ENCODE measurements at regions of chr19 and their contacts with region 1.

Region 1: DNA sequence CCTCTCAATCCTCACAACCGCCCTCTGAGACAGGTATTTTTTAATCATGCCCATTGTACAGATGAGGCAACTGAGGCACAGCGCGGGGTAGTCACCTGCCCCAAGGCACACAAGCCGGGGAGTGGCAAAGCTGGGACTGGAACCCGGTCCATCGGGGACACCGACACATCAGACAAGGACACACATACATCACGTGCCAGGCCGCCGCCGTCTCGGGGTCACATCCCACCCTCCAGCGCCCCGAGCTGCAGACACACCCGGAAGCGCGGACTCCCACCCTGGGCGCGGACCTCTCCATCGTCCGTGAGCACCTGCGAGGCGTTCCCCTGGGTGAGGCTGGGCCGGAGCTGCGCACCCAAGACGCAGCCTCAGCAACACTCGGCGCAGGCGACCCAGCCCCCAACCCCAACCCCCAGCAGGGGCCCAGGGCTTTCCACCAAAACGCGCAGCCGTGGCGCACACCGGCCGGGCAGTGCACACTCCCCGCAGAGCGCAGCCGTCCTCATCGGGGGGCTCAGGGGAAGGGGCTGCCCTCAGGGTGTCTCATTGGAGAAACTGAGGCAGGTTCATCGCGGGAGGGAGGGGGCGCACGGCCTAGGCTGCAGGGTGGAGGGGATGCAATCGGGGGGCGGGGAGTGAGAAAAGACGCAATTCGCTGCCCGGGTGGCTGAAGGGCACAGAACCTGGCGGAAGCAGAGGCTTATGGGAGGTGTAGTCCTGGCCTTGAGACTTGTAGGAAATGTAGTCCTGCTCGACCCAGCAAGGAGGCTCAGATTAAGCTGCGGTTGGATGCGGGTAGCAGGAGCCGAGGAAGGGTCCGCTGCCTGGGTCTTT is 1.9 kb upstream of the LMTK3 start:
- DNase-seq: peak; percentile 70 to 88 (median 73)
- H3K4me3 ChIP-seq: peak overlapping the region; percentile 65 to 89
- H3K4me3 Mint-ChIP-seq: no peak overlapping the region
- H3K27ac ChIP-seq: peak overlapping the region; percentile 59
- H3K27ac Mint-ChIP-seq: peak overlapping the region in 3 of 7 donors; percentile 68 to 96 (median 91)
- H3K4me1 ChIP-seq: peaks cover 27% of the 10 kb centered on the region
- H3K4me1 Mint-ChIP-seq: peaks cover 6 to 16% (median 11%) of the 10 kb centered on the region in 4 donors
- H3K27me3 ChIP-seq: no peaks in the 10 kb centered on the region
- H3K27me3 Mint-ChIP-seq: no peaks in the 10 kb centered on the region

Region 2: DNA sequence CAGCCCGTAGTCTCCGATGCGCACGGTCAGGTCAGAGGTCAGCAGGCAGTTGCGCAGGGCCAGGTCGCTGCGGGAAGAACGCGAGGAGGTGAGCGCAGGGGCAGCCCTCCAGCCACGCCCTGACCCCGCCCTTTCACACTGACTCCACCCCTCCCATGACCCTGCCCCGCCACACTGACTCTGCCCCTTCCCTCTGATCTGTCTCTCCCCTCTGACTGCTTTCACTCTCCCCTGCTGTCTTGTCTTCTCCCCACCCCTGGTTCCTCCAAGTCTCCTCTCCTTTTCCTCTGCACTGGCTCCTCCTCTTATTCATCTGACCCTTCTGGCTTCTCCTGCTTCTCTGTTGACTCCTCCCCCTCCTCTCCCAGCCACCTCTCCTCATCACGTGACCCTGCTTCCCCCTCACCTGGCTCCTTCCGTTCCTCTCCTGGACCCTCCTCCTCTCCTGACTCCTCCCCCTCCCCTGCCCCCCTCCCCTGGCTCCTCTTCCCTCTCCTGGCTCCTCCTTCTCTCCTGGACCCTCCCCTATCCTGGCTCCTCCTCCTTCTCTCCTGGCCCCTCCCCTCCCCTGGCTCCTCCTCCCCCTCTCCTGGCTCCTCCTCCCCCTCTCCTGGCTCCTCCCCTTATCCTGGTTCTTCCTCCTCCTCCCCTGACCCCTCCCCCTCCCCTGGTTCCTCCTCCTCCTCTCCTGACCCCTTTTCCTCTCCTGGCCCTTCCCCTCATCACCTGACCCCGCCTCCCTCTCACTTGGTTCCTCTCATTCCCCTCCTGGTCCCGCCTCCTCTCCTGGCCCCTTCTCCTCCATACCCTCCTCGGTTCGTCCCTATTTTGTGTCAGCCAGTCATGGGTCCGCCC is 11.8 kb before region 1 on chr19:
- CTCF ChIA-PET with region 1: interaction called, 7 read pairs
- POLR2A ChIA-PET with region 1: interaction called, 10 read pairs
- intact Hi-C with region 1: no loop called
- DNase-seq: peak; percentile 68 to 82 (median 76)
- H3K4me3 ChIP-seq: no peak overlapping the region
- H3K4me3 Mint-ChIP-seq: peak overlapping the region; percentile 22 to 82 (median 76)
- H3K27ac ChIP-seq: peak overlapping the region; percentile 26
- H3K27ac Mint-ChIP-seq: peak overlapping the region in 6 of 7 donors; percentile 48 to 87 (median 78)
- H3K4me1 ChIP-seq: peaks cover 13% of the 10 kb centered on the region
- H3K4me1 Mint-ChIP-seq: peaks cover 5 to 27% (median 14%) of the 10 kb centered on the region in 4 donors
- H3K27me3 ChIP-seq: no peaks in the 10 kb centered on the region
- H3K27me3 Mint-ChIP-seq: peaks cover 4 to 10% of the 10 kb centered on the region in 2 donors

Region 3: GRCh38 chr19:48553676-48554386 is 40.3 kb after region 1 on chr19:
- CTCF ChIA-PET with region 1: no interaction called
- POLR2A ChIA-PET with region 1: no interaction called
- intact Hi-C with region 1: no loop called
- DNase-seq: no peak
- H3K4me3 ChIP-seq: no peak overlapping the region
- H3K4me3 Mint-ChIP-seq: no peak overlapping the region
- H3K27ac ChIP-seq: no peak overlapping the region
- H3K27ac Mint-ChIP-seq: no peak overlapping the region
- H3K4me1 ChIP-seq: no peaks in the 10 kb centered on the region
- H3K4me1 Mint-ChIP-seq: peaks cover 0 to 4% (median under 1%) of the 10 kb centered on the region in 4 donors
- H3K27me3 ChIP-seq: no peaks in the 10 kb centered on the region
- H3K27me3 Mint-ChIP-seq: peaks cover 5% of the 10 kb centered on the region in 2 donors